Activated T-helper 2 cell treated with anti-CD3 and anti-CD28 coated beads, Interferon-gamma antibody, Interleukin-2, Interleukin-4, amounts not matched to agents 10 μg/mL and 5 μg/mL and 100 μg/mL, durations not matched to agents 14 hours and 24 hours and 36 hours (primary cell): ENCODE measurements at regions of chr21 and their contacts with region 1.

Region 1: DNA sequence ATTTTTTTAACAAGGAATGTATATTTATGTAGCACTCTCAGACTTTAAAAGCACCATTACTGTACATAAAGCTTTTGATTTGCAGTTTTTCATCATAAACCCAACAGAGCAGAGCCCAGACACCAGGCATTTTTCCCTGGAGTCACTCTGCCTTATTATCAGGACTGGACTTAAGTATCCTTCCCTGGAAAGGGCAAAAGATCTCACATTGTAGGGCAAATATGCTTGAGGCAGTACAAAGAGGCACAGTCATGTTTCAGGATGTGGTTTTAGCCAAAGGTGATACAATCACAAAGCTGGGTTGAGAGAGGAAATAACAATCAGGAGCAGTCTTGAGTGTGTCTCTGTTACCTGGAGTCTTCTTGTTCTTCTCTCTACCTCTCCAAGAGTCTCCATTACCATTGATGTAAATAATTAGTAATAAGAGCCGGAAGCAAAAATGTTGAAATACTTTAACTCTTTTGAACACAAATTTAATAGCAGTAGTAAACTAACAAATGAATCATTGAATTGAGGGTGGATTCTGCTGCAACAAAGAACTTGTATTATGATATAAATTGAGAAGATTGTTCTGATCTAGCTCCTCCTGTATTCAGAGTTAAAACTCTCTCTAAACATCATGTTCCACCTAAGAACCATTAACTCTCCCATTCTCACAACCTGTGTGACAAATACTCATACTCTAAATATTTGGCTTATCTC is 160.5 kb downstream of the LTN1 start:
- DNase-seq: peak; percentile 28
- H3K4me3 Mint-ChIP-seq: peak overlapping the region; percentile 9
- H3K27ac Mint-ChIP-seq: peak overlapping the region; percentile 67
- H3K4me1 Mint-ChIP-seq: peaks cover 66% of the 10 kb centered on the region
- H3K27me3 Mint-ChIP-seq: no peaks in the 10 kb centered on the region

Region 2: DNA sequence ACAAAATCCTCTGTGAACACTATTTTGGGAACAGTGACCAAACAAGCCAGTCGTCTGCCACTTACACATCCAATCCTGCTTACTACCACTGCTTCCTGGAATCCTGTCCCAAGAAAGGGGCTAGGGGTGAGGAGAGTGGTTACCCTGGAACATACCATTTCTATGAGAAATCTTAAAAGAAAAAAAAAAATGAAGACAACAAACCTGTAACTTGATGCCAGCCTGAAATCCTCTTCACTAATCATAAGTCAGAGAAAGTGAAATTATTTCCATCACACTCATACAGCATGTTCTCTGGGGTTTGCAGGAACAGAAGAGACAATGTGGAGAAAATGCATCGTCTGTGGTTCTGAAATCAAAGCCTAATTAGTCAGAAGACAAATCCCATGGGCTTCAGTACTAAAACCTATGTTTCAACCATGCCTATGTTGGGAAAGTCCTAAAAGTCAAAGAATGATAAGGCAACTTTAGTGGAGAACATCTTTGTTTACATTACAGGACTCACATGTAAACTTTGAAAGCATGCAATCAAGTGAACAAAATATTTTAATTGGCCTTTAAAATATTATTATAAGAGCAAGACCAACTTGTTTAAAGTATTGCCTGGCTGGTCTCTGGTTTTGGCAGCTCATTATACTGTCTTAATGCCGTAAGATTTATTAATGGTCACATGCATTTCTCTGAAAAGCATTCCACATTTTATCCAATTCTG is 60.2 kb before region 1 on chr21:
- intact Hi-C with region 1: loop called (anchors 5 kb)
- DNase-seq: no peak
- H3K4me3 Mint-ChIP-seq: no peak overlapping the region
- H3K27ac Mint-ChIP-seq: no peak overlapping the region
- H3K4me1 Mint-ChIP-seq: peaks cover 40% of the 10 kb centered on the region
- H3K27me3 Mint-ChIP-seq: no peaks in the 10 kb centered on the region

Region 3: GRCh38 chr21:28928578-28929420 is 96.6 kb after region 1 on chr21:
- intact Hi-C with region 1: no loop called
- DNase-seq: no peak
- H3K4me3 Mint-ChIP-seq: no peak overlapping the region
- H3K27ac Mint-ChIP-seq: no peak overlapping the region
- H3K4me1 Mint-ChIP-seq: peaks cover 1% of the 10 kb centered on the region
- H3K27me3 Mint-ChIP-seq: no peaks in the 10 kb centered on the region